Colonic mucosa (tissue), 4 donors: ENCODE measurements at regions of chr9 and their contacts with region 1.

Region 1: DNA sequence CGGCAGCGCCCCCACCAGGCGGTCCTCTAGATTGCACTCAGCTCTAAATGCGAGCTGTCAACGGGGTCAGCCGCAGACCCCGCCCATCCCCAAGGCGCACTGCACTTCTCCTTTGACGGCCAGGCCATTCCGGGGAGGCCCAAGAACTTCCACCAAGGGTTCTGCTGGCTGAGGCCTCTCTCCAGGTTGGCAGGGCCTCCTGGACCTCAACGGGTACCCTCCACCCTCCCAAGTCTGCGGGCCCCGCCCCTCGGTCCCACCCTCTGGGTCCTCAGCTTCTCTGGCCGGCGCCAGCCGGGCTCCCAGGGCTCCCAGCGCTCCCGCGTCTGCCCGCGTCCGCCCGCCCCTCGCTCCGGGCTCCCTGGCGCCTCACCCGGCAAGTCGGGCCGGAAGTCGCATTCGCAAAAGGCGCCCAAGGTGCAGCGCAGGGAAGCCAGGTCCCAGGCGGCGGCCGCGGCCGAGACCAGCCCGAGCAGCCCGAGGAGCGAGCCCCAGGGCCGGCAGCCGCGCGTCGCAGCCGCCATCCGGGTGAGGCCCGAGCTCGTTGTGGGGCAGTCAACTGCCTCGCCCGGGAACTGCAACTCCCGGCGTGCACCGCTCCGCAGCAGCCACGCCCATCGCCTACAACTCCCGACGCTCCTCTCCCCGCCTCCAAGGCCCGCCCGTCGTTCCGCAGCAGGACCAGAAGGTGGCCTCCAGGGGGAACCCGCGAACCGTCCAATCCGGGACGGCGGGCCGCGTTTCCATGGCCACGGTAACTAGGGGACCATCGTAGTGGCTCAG is at the start of gene TOR2A:
- DNase-seq: peak; percentile 98
- H3K4me3 ChIP-seq: peak within 1 kb of the TSS; percentile 88
- H3K27ac ChIP-seq: peak within 1 kb of the TSS; percentile 97
- H3K4me1 ChIP-seq: peaks cover 7% of the 10 kb centered on the region
- H3K27me3 ChIP-seq: no peaks in the 10 kb centered on the region
- CTCF ChIP-seq: peak; percentile 94
- total RNA-seq, gene TOR2A: 25.8 to 29.8 TPM

Region 2: GRCh38 chr9:127503947-127504782 is 230.8 kb before region 1 on chr9:
- intact Hi-C with region 1: loop called (anchors 10 kb)
- DNase-seq: peak; percentile 84
- H3K4me3 ChIP-seq: no peak overlapping the region
- H3K27ac ChIP-seq: no peak overlapping the region
- H3K4me1 ChIP-seq: no peaks in the 10 kb centered on the region
- H3K27me3 ChIP-seq: no peaks in the 10 kb centered on the region
- CTCF ChIP-seq: peak; percentile 86

Region 3: DNA sequence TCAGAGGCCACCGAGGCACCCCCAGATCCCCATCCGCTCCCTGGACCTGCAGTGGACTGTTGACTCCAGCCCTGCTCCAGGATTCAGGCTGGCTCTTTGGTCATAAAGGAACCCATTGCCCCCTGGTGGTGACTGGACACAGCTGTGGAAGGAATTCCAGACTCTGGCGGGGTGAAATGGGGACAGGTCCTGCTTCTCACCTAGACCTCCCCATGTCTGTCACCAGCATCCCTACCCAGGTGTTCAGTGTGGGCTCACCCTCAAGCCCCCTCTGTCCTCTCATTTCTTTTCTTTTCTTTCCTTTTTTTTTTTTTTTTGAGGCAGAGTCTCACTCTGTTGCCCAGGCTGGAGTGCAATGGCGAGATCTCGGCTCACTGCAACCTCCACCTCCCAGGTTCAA is 148.4 kb before region 1 on chr9:
- intact Hi-C with region 1: loop called (anchors 2 kb)
- DNase-seq: peak; percentile 89
- H3K4me3 ChIP-seq: no peak overlapping the region
- H3K27ac ChIP-seq: no peak overlapping the region
- H3K4me1 ChIP-seq: peaks cover 3% of the 10 kb centered on the region
- H3K27me3 ChIP-seq: no peaks in the 10 kb centered on the region
- CTCF ChIP-seq: peak; percentile 85

Region 4: DNA sequence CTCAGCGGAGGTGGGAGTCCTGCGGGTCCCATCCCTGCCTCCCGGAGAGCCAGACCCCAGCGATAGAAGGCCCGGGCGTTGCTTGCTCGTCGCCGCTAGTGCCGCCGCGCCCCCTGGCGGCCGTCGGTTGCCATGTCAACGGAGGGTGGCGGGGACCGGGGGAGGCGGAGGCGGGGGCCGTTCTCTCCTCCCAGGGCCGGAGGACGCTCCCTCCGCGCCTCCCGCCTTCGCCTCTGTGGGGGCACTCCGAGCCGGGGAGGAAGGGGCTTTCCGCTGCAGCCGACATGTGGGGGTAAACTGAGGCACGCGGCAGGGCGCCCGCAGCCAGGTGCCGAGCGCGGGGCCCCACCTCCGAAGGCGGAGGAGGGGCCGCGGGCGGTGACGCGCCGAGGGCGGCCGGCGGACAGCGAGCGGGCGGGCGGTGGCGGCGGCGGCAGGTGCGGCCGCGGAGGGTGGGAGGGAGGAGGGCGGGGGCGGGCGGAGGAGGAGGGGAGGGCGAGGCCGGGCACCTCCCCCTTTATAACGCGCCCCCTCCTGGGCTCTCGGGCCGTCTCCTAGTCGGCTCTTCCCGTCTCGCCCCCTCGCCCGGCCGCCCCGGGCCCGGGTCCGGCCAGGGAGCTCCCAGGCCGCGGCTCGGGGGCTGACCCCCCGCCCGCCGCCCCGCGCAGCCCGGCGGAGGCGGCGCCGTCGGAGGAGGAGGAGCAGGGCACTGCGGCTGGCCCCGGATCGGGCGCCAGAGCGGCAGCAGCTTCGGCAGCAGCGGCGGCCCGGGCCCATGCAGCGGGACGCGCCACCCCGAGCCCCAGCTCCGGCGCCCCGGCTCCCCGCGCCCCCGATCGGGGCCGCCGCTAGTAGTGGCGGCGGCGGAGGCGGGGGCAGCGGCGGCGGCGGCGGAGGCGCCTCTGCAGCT is 50.3 kb after region 1 on chr9:
- intact Hi-C with region 1: loop called (anchors 2 kb)
- DNase-seq: peak; percentile 89
- H3K4me3 ChIP-seq: peak overlapping the region; percentile 98
- H3K27ac ChIP-seq: peak overlapping the region; percentile 96
- H3K4me1 ChIP-seq: no peaks in the 10 kb centered on the region
- H3K27me3 ChIP-seq: no peaks in the 10 kb centered on the region
- CTCF ChIP-seq: peak; percentile 85

Region 5: GRCh38 chr9:127869310-127870152 is 134.6 kb after region 1 on chr9:
- intact Hi-C with region 1: loop called (anchors 5 kb)
- DNase-seq: peak; percentile 94
- H3K4me3 ChIP-seq: no peak overlapping the region
- H3K27ac ChIP-seq: no peak overlapping the region
- H3K4me1 ChIP-seq: peaks cover 7% of the 10 kb centered on the region
- H3K27me3 ChIP-seq: no peaks in the 10 kb centered on the region
- CTCF ChIP-seq: peak; percentile 81

Region 6: DNA sequence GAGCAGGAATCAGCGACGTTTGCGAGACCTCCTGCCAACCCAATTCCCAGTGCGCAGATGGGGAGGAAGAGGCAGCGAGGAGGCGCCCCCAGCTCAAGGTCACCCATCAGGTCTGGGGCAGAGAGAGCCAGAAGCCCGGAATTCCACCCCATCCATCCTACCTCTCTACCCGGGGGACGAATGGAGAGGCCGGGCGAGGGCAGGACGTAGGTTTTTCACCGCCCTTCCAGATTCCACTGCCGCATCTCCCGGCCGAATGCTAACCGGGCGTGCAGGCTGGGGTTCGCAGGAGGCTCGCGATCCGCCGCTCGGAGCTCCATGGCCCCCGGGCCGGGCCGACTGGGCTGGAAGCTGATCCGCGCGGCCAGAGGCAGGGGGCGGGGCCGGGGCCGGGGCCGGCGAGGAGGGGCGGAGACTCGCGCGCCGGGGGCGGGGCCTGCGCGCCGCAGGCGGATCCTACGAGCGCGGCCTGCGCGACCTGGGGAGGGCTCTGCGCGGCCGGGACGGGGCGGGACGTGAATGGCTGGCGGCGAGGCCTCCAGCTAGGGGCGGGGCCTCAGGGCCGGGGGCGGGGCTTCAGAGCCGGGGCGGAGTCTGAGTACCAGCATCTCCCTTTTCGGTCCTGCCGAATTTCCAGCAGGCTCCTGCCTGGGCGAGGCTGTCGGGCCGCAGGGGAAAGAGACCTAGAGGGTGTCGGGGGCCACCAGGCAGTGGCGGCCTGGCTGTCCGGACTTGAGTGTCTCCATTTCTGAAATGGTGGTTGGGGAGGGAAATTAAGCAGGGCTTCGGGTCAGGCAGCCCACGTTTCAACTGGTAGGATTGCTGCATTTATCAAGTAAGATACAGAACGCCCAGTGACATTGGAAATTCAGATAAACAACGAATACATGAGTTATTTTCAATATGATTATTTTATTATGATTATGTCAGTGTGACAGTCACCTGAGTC is 182.0 kb after region 1 on chr9 and contains the start of gene ST6GALNAC4:
- intact Hi-C with region 1: loop called (anchors 2 kb)
- DNase-seq: peak; percentile 97
- H3K4me3 ChIP-seq: peak within 1 kb of the TSS; percentile 59
- H3K27ac ChIP-seq: peak within 1 kb of the TSS; percentile 57
- H3K4me1 ChIP-seq: peaks cover 35% of the 10 kb centered on the region
- H3K27me3 ChIP-seq: no peaks in the 10 kb centered on the region
- CTCF ChIP-seq: no peak
- total RNA-seq, gene ST6GALNAC4: 25.4 to 66.5 TPM